HEK293T (cell line): ENCODE measurements at regions of chr4 and their contacts with region 1.

Region 1: DNA sequence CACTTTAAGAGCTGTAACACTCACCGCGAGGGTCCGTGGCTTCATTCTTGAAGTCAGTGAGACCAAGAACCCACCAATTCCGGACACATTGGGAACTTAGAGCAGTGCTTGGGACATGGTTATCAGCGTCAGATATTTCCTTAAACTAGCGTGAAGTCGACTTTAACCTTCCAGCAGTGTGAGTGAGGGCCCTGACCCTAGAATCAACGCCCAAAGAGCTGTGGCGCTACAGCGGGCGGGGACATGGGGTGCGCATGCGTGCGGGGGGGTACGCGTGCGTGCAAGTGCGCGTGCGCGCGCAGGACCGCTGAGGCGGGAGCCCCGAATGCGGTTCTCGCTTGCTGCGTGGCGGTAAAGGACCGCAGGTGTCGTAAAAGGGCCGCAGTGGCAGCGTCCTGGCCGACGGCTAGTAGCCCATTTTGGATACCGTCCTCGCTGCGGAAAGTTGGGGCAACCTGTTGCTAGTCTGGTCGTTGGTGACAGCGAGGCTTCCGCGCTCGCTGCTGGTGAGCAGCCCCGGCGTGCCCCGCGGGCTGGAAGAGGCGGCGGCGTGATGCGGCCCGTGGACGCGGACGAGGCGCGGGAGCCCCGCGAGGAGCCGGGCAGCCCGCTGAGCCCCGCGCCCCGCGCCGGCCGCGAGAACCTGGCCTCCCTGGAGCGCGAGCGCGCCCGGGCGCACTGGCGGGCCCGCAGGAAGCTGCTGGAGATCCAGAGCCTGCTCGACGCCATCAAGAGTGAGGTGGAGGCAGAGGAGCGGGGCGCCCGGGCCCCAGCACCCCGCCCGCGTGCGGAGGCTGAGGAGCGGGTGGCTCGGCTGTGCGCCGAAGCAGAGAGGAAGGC is 19.8 kb upstream of the S100P start:
- DNase-seq: peak; percentile 98

Region 2: GRCh38 chr4:6137027-6137746 is 536.7 kb before region 1 on chr4:
- CTCF ChIA-PET with region 1: no interaction called
- POLR2A ChIA-PET with region 1: no interaction called
- DNase-seq: no peak

Region 3: GRCh38 chr4:6574747-6575502 is 99.0 kb before region 1 on chr4 and contains the start of gene MAN2B2:
- CTCF ChIA-PET with region 1: interaction called, 5 read pairs
- POLR2A ChIA-PET with region 1: interaction called, 18 read pairs
- DNase-seq: peak; percentile 98

Region 4: GRCh38 chr4:6619471-6619870 is 54.4 kb before region 1 on chr4:
- CTCF ChIA-PET with region 1: no interaction called
- POLR2A ChIA-PET with region 1: no interaction called
- DNase-seq: no peak

Region 5: GRCh38 chr4:6633041-6633906 is 40.6 kb before region 1 on chr4:
- CTCF ChIA-PET with region 1: no interaction called
- POLR2A ChIA-PET with region 1: interaction called, 17 read pairs
- DNase-seq: no peak

Region 6: DNA sequence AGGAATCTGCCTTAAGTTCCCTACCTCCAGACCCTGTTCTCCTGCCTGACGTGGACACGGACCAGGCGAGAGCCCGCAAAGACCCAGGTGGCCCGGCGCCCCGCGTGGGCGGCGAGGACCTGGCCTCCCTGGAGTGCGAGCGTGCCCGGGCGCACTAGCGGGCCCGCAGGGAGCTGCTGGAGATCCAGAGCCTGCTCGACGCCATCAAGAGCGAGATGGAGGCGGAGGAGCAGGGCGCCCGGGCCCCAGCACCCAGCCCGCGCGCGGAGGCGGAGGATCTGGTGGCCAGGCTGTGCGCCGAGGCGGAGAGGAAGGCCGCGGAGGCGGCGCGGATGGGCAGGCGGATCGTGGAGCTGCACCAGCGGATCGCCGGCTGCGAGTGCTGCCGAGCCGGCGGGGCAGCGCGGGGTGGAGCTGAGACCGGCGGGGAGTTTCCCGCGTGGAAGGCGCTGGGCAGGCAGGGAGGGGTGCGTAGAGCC is 15.2 kb before region 1 on chr4:
- CTCF ChIA-PET with region 1: interaction called, 4 read pairs
- POLR2A ChIA-PET with region 1: interaction called, 32 read pairs
- DNase-seq: no peak

Region 7: DNA sequence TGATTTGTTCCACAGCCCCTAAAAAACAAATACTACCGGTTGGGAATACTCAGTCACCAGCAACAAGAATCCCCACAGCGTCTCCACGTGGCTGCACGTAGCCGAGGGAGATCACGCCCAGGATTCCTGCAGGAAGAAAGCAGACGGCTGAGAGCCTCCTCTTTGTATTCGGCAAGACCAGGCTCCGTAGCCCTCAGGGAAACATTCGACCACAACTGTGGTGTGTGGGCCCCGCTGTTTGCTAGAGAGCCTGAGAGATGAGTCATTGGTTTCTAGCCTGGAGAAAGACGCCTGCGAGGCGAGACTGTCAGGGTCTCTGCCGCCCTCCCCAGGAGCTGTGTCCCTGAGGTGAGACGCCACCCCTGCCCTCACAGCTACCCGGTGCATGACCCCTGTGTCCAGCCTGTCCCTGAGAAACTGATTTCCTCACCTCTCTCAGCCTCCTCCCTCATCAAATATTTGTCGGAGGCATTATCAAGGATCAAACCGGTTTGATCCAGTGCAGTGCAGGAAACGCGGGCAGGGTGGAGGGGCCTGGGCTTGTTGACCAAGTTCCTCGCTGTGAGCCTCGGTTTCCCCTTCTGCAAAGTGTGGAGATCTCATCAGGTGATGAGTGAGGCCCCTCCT is 15.1 kb after region 1 on chr4:
- CTCF ChIA-PET with region 1: interaction called, 3 read pairs
- POLR2A ChIA-PET with region 1: interaction called, 55 read pairs
- DNase-seq: peak; percentile 59

Region 8: DNA sequence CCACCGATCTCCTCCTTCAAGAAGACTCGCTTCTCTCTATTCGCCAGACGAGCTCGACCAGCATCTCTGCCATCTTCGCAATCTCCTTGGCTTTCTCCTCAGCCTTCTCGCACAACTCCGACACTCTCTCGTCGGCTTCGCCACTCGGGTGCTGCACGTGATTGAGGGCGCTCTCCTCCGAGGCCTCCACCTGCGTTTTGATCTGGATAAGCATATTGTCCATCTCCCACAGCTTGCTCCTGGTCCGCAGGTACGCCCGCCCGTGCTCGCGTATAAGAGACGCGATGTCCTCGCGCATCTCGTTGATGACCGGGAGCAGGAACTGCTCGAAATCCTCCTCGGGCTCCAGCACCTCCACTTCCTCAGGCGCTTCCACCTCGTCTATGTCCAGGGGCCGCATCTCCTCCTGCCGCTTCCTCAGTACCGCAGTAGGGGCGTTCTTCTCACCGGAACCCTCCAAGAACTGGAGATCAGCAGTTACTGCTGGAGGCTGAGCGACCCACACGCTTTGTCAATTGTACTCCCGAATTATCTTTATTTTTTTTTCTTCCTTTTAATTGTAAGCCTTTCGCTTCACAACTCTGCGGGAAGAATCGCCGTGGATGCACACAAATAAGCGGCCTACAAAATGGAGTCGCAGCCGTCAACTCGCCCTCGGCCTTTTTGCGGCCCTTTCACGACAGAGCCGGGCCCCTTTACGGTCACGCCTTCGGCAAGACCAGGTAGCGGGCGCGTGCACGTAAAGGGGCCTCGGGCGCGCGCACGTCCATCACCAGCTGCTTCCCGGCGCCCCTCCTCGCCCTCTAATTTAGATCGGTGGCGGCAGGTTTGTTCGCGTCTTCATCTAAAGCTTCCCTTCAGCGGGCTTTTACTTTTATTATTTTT is 35.6 kb after region 1 on chr4 and contains the start of gene MRFAP1L1:
- CTCF ChIA-PET with region 1: interaction called, 3 read pairs
- POLR2A ChIA-PET with region 1: interaction called, 62 read pairs
- DNase-seq: peak; percentile 94